Activated naive CD4-positive, alpha-beta T cell treated with anti-CD3 and anti-CD28 coated beads for 36 hours (primary cell): ENCODE measurements at regions of chr2 and their contacts with region 1.

Region 1: DNA sequence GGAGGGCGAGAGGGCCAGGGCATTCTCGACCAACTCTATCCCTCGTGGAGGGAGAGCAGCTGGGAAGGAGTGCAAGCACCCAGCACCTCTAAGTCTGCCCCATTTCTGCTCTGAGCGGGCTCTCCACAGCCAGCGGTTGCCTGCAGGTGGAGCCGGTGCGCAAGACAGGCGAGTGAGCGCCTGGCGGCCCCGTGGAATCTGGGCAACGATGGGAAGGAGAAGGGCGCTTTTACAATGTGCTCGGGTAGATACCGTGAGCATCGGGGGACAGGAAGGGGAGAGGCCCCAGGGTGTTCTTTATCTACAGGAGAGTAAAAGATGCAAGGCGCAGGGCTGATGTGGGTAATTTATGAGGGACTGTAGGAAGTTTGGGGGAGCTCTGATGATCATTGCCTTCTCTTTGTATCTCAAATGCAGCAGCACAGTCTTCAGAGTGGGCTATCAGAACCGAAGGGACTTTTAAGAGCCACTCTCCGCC is 867 bp upstream of the TTL start:
- DNase-seq: peak; percentile 91
- H3K4me3 Mint-ChIP-seq: peak overlapping the region; percentile 95
- H3K27ac Mint-ChIP-seq: peak overlapping the region; percentile 81
- H3K4me1 Mint-ChIP-seq: peaks cover 28% of the 10 kb centered on the region
- H3K27me3 Mint-ChIP-seq: no peaks in the 10 kb centered on the region

Region 2: GRCh38 chr2:112542123-112542983 is 61.3 kb after region 1 on chr2 and contains the start of gene POLR1B:
- CTCF ChIA-PET with region 1: interaction called, 18 read pairs
- intact Hi-C with region 1: loop called (anchors 1 kb)
- DNase-seq: peak; percentile 82
- H3K4me3 Mint-ChIP-seq: no peak within 1 kb of the TSS
- H3K27ac Mint-ChIP-seq: no peak within 1 kb of the TSS
- H3K4me1 Mint-ChIP-seq: peaks cover 19% of the 10 kb centered on the region
- H3K27me3 Mint-ChIP-seq: no peaks in the 10 kb centered on the region
- total RNA-seq, gene POLR1B: 34.5 to 36.1 TPM